ENCODE measurements at regions of chr1 and their contacts with region 1.

Region 1: DNA sequence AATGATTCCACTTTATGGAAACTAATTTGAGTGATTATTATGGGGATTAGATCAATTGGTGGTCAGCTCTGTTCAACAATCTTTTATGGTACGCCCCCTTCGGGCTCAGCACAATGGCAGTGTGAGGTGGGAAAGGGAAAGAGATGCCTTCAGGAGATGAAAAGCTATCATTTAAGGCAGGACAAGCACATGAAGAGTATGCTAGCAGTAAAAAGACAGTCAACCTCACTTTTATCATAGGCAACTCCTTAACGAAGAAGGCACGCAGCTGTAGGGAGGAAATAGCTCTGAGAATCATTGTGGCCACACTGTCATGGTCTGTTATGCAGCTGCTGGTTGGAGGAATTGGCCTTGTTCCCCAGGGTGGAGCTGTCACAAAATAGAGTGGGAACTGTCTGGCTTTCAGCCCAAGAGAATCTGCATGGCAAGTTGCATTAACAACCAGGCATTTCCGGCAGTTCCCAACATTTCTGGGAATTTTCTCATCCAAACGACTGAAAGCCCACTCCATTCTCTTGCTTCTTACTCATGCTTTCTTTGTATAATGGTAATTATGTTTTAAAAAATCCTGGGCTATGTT is 54.4 kb upstream of the BCL10 start:
- DNase-seq: peak; percentile 96
- H3K4me3 ChIP-seq: no peak overlapping the region
- CTCF ChIP-seq: no peak

Region 2: DNA sequence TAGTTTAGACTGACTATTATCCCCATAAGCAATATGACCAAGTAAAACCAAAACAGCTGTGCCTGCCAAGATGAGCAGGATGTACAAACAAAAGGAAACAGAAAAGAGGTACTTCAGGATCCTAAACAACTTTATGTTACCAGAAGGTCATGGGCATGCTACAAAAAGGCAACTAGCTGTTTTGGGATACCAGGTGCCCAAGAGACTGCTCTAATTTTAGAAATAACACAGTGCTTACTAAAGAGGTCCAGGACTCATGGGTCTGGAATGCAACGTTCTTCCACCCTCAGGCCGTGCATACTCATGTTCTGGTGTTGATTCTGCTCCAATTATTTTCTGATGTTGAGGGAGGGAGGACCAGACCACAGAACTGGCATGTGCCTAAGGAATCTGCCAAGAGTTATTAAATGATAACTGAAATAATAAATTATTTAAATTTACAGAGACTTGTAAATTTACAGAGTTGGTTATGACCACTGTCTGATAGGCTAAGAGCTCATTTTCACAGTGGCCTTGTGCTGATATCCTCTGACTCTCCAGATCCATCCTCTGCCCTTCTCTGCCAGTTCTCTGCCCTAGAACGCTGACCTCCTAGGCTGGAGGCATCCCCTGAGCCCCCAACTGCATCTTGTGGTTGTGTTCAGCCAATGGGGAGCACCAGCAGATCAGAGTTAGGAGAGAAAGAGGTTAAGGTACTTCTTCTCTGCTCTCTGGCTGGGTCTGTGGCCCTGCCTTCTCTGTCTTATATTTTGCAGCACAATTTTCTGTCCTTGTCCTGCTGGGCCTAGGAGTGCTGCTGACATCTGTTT is 16.7 kb before region 1 on chr1:
- CTCF ChIA-PET with region 1: interaction called, 14 read pairs
- POLR2A ChIA-PET with region 1: interaction called, 15 read pairs
- DNase-seq: peak; percentile 93
- H3K4me3 ChIP-seq: no peak overlapping the region
- CTCF ChIP-seq: no peak

Region 3: GRCh38 chr1:85344256-85344694 is 13.5 kb after region 1 on chr1:
- CTCF ChIA-PET with region 1: interaction called, 6 read pairs
- POLR2A ChIA-PET with region 1: interaction called, 45 read pairs
- DNase-seq: no peak
- H3K4me3 ChIP-seq: no peak overlapping the region
- CTCF ChIP-seq: peak; percentile 76

Region 4: GRCh38 chr1:85387781-85388180 is 57.0 kb after region 1 on chr1:
- CTCF ChIA-PET with region 1: no interaction called
- POLR2A ChIA-PET with region 1: no interaction called
- DNase-seq: no peak
- H3K4me3 ChIP-seq: no peak overlapping the region
- CTCF ChIP-seq: no peak